ENCODE measurements at regions of chr5 and their contacts with region 1.

Region 1: GRCh38 chr5:132820162-132820754 is 7.2 kb downstream of the SOWAHA start:
- DNase-seq: peak; percentile 92
- H3K4me3 Mint-ChIP-seq: no peak overlapping the region
- H3K27ac Mint-ChIP-seq: no peak overlapping the region
- H3K4me1 Mint-ChIP-seq: peaks cover 12% of the 10 kb centered on the region
- H3K27me3 Mint-ChIP-seq: peaks cover 49% of the 10 kb centered on the region

Region 2: DNA sequence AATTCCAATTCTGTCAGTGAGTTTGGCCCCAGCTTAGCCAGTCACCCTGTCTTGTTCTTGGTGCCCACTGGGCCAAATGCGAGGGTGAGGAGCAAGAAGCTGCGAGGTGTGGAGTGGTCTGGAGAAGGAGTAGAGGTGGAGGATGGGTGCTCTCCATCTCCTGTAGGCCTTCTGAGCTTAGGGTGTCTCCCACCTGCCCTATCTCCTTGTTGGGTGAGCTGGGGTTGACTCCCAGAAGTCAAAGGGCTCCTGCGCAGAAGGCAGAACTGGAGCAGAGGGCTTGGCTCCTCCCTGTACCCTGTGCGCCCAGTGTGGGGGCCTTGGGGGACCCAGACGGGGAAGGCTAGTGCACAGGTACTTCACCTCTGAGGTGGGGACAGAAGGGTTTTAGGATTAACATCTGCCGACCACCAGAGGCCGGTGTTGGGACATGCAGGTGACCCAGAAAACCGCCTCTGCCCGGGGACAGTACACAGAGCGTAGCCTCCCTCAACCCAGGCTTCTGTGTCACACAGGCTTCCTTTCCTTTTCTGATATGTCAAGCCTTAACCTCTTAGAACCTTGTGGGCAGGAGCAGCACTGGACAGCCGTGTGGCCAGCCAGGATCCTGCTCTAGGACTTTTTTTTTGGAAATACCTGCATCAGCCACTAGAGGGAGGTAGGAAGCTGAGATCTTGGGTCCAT is 293.8 kb before region 1 on chr5:
- CTCF ChIA-PET with region 1: interaction called, 22 read pairs
- POLR2A ChIA-PET with region 1: no interaction called
- DNase-seq: peak; percentile 55
- H3K4me3 Mint-ChIP-seq: no peak overlapping the region
- H3K27ac Mint-ChIP-seq: no peak overlapping the region
- H3K4me1 Mint-ChIP-seq: peaks cover 35% of the 10 kb centered on the region
- H3K27me3 Mint-ChIP-seq: peaks cover 11% of the 10 kb centered on the region

Region 3: GRCh38 chr5:132746954-132747615 is 73.2 kb before region 1 on chr5 and contains the start of gene CCNI2:
- CTCF ChIA-PET with region 1: interaction called, 10 read pairs
- POLR2A ChIA-PET with region 1: no interaction called
- DNase-seq: peak; percentile 62
- H3K4me3 Mint-ChIP-seq: peak within 1 kb of the TSS; percentile 69
- H3K27ac Mint-ChIP-seq: peak within 1 kb of the TSS; percentile 76
- H3K4me1 Mint-ChIP-seq: peaks cover 28% of the 10 kb centered on the region
- H3K27me3 Mint-ChIP-seq: peaks cover 17% of the 10 kb centered on the region
- total RNA-seq, gene CCNI2: 5.5 to 6.2 TPM

Region 4: DNA sequence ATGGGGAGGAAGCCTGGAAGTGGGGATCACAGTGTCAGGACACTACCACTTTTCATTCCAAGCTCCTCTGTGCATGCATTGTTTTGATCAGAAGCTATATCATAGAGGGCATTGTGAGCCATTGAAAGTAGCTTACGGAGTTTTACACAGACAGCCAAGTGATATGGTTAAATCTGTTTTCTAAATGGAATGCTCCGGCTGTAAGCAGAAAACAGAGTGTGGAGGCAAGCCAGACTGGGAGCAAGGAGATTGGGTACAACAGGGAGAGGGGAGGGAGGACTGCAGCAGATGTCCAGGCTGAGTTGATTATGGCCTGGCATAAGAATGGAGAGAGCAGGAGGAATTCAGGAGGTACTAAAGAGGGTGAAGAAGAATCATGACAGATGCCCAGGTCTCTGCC is 22.6 kb before region 1 on chr5:
- CTCF ChIA-PET with region 1: interaction called, 11 read pairs
- POLR2A ChIA-PET with region 1: interaction called, 3 read pairs
- DNase-seq: no peak
- H3K4me3 Mint-ChIP-seq: no peak overlapping the region
- H3K27ac Mint-ChIP-seq: no peak overlapping the region
- H3K4me1 Mint-ChIP-seq: no peaks in the 10 kb centered on the region
- H3K27me3 Mint-ChIP-seq: peaks cover 43% of the 10 kb centered on the region

Region 5: GRCh38 chr5:132807163-132807838 is 13.0 kb before region 1 on chr5:
- CTCF ChIA-PET with region 1: interaction called, 29 read pairs
- POLR2A ChIA-PET with region 1: no interaction called
- DNase-seq: no peak
- H3K4me3 Mint-ChIP-seq: no peak overlapping the region
- H3K27ac Mint-ChIP-seq: no peak overlapping the region
- H3K4me1 Mint-ChIP-seq: no peaks in the 10 kb centered on the region
- H3K27me3 Mint-ChIP-seq: peaks cover 68% of the 10 kb centered on the region

Region 6: GRCh38 chr5:132854301-132854700 is 34.0 kb after region 1 on chr5:
- CTCF ChIA-PET with region 1: interaction called, 12 read pairs
- POLR2A ChIA-PET with region 1: no interaction called
- DNase-seq: no peak
- H3K4me3 Mint-ChIP-seq: no peak overlapping the region
- H3K27ac Mint-ChIP-seq: no peak overlapping the region
- H3K4me1 Mint-ChIP-seq: peaks cover 4% of the 10 kb centered on the region
- H3K27me3 Mint-ChIP-seq: peaks cover 4% of the 10 kb centered on the region

Measured in activated CD4-positive, alpha-beta T cell treated with anti-CD3 and anti-CD28 coated beads, Interleukin-2, amount 10 ng/mL, durations not matched to agents 7 days and 5 days (primary cell).